Vagina (tissue), 2 donors: ENCODE measurements at regions of chr10 and their contacts with region 1.

Region 1: GRCh38 chr10:11515596-11516430 is 95.6 kb downstream of the USP6NL start:
- DNase-seq: no peak
- H3K4me3 ChIP-seq: no peak overlapping the region
- H3K27ac ChIP-seq: no peak overlapping the region
- H3K4me1 ChIP-seq: no peaks in the 10 kb centered on the region
- H3K27me3 ChIP-seq: no peaks in the 10 kb centered on the region
- CTCF ChIP-seq: peak; percentile 57 to 82 (median 66)
- POLR2A ChIP-seq: no peak

Region 2: GRCh38 chr10:11434324-11434723 is 81.5 kb before region 1 on chr10:
- intact Hi-C with region 1: no loop called
- DNase-seq: no peak
- H3K4me3 ChIP-seq: no peak overlapping the region
- H3K27ac ChIP-seq: no peak overlapping the region
- H3K4me1 ChIP-seq: peaks cover 5% of the 10 kb centered on the region
- H3K27me3 ChIP-seq: no peaks in the 10 kb centered on the region
- CTCF ChIP-seq: no peak
- POLR2A ChIP-seq: no peak

Region 3: GRCh38 chr10:11724938-11725776 is 209.3 kb after region 1 on chr10:
- intact Hi-C with region 1: loop called (anchors 10 kb)
- DNase-seq: no peak
- H3K4me3 ChIP-seq: no peak overlapping the region
- H3K27ac ChIP-seq: no peak overlapping the region
- H3K4me1 ChIP-seq: no peaks in the 10 kb centered on the region
- H3K27me3 ChIP-seq: no peaks in the 10 kb centered on the region
- CTCF ChIP-seq: peak in 2 of 3 experiments; percentile 19 to 67
- POLR2A ChIP-seq: no peak

Region 4: DNA sequence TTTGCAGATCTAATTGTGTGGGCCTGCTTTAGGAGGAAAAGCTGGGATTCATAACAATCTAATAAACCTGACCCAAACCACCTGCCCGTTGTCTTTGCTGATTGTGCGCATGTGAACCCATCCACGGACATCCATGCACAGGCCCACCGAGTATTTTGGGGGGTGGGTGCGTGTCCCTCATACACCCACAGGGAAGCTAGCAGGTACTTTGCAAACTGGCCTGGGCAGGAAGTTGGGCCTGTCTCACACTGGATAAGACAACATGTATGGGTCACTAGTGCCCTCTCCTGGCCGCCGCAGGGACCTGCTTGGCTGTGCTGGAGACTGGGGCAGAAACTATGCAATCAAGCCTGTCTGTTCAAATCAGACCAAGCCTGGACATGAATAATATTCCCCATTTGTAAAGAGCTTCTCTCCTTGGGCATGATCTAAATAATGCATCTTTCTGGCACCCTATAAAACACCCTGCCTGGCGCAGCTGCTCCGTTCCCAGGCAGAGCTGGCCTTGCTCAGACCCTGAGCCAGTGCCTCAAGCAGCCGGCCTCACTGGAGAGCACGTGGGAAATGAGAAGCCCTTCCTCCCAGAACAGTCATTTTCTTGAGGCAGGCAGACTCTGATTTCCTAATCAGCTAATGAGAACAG is 242.1 kb after region 1 on chr10:
- intact Hi-C with region 1: loop called (anchors 5 kb)
- DNase-seq: peak in 1 of 2 donors; percentile 93
- H3K4me3 ChIP-seq: no peak overlapping the region
- H3K27ac ChIP-seq: peak overlapping the region; percentile 70
- H3K4me1 ChIP-seq: peaks cover 25% of the 10 kb centered on the region
- H3K27me3 ChIP-seq: no peaks in the 10 kb centered on the region
- CTCF ChIP-seq: peak; percentile 56 to 83 (median 75)
- POLR2A ChIP-seq: no peak